Naive thymus-derived CD4-positive, alpha-beta T cell (primary cell): ENCODE measurements at regions of chr1 and their contacts with region 1.

Region 1: GRCh38 chr1:108570128-108570527 is 10.2 kb downstream of the EEIG2 start:
- DNase-seq: peak in 4 of 9 donors; percentile 13 to 37 (median 20)
- ATAC-seq: peak; percentile 96
- H3K4me3 ChIP-seq: no peak overlapping the region
- H3K4me3 Mint-ChIP-seq: no peak overlapping the region
- H3K27ac ChIP-seq: no peak overlapping the region
- H3K27ac Mint-ChIP-seq: no peak overlapping the region
- H3K4me1 ChIP-seq: peaks cover 0 to 6% of the 10 kb centered on the region in 2 donors
- H3K4me1 Mint-ChIP-seq: peaks cover 0 to 6% (median 4%) of the 10 kb centered on the region in 7 donors
- H3K27me3 ChIP-seq: no peaks in the 10 kb centered on the region
- H3K27me3 Mint-ChIP-seq: no peaks in the 10 kb centered on the region

Region 2: DNA sequence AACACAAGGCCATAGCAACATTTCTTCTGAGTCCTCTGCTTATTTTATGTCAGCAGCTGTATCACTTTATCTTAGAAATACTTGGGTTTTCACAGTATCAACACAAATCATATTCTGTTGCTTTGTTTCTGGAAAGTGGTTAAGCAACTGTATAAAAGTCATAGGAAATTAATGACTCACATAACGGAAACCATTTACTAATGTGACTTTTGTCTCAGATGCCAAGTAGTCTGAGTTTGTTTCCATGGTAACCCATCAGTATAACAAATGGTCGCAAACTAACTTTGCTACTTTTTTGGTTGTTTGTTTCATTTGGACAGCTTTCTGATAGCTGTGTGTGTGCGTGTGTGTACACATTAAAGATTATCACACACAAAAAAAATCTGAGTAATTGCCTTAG is 20.8 kb after region 1 on chr1:
- CTCF ChIA-PET with region 1: interaction called, 3 read pairs
- POLR2A ChIA-PET with region 1: no interaction called
- intact Hi-C with region 1: loop called in 1 of 2 experiments (anchors 2 kb)
- DNase-seq: peak in 7 of 9 donors; percentile 4 to 55 (median 43)
- ATAC-seq: peak; percentile 87
- H3K4me3 ChIP-seq: no peak overlapping the region
- H3K4me3 Mint-ChIP-seq: no peak overlapping the region
- H3K27ac ChIP-seq: no peak overlapping the region
- H3K27ac Mint-ChIP-seq: peak overlapping the region in 2 of 9 donors; percentile 28 to 63
- H3K4me1 ChIP-seq: peaks cover 0 to 22% of the 10 kb centered on the region in 2 donors
- H3K4me1 Mint-ChIP-seq: peaks cover 19 to 49% (median 45%) of the 10 kb centered on the region in 7 donors
- H3K27me3 ChIP-seq: no peaks in the 10 kb centered on the region
- H3K27me3 Mint-ChIP-seq: no peaks in the 10 kb centered on the region

Region 3: DNA sequence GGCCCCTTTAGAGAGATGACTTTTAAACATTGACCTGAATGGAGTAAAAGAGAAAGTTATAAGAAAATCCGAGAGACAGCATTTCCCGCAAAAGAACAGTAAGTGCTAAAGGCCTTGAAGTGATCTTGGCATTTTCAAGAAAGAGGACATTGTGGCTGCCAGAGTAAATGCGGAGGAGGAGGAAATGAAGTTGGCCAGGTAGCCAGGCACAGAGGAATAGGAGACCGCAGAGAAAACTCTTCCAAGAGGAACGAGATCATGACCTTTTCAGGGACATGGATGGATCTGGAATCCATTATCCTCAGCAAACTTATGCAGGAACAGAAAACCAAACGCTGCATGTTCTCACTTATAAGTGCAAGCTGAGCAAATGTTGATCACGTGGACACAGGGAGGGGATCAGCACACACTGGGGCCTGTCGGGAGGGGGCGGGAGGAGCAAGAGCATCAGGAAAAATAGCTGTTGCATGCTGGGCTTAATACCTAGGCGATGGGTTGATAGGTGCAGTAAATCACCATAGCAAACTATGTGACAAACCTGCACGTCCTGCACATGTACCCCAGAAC is 39.4 kb after region 1 on chr1:
- CTCF ChIA-PET with region 1: no interaction called
- POLR2A ChIA-PET with region 1: no interaction called
- intact Hi-C with region 1: loop called in 1 of 2 experiments (anchors 5 kb)
- DNase-seq: no peak
- ATAC-seq: no peak
- H3K4me3 ChIP-seq: no peak overlapping the region
- H3K4me3 Mint-ChIP-seq: no peak overlapping the region
- H3K27ac ChIP-seq: no peak overlapping the region
- H3K27ac Mint-ChIP-seq: no peak overlapping the region
- H3K4me1 ChIP-seq: no peaks in the 10 kb centered on the region
- H3K4me1 Mint-ChIP-seq: peaks cover 0 to 6% (median 0%) of the 10 kb centered on the region in 7 donors
- H3K27me3 ChIP-seq: no peaks in the 10 kb centered on the region
- H3K27me3 Mint-ChIP-seq: no peaks in the 10 kb centered on the region